GM13976 (cell line): ENCODE measurements at regions of chr1 and their contacts with region 1.

Region 1: GRCh38 chr1:24391882-24392603 is 21.5 kb downstream of the STPG1 start:
- DNase-seq: peak; percentile 78
- CTCF ChIP-seq: peak; percentile 73

Region 2: GRCh38 chr1:24201941-24202440 is 190.1 kb before region 1 on chr1:
- in situ Hi-C with region 1: loop called (anchors 5 kb)
- DNase-seq: peak; percentile 66
- CTCF ChIP-seq: peak; percentile 79